Activated T-helper 1 cell treated with anti-CD3 and anti-CD28 coated beads, Interleukin-12 subunit alpha, Interleukin-12 subunit beta, Interleukin-2, Interleukin-4 antibody, amounts not matched to agents 30 ng/mL and 10 ng/mL and 1 ng/mL, durations not matched to agents 14 hours and 24 hours and 36 hours (primary cell): ENCODE measurements at regions of chr11 and their contacts with region 1.

Region 1: GRCh38 chr11:7278314-7278917 is 26.7 kb downstream of the SYT9 start:
- DNase-seq: no peak
- H3K4me3 Mint-ChIP-seq: no peak overlapping the region
- H3K27ac Mint-ChIP-seq: no peak overlapping the region
- H3K4me1 Mint-ChIP-seq: no peaks in the 10 kb centered on the region
- H3K27me3 Mint-ChIP-seq: no peaks in the 10 kb centered on the region

Region 2: GRCh38 chr11:6812390-6813005 is 465.9 kb before region 1 on chr11:
- intact Hi-C with region 1: loop called (anchors 10 kb)
- DNase-seq: peak; percentile 15
- H3K4me3 Mint-ChIP-seq: no peak overlapping the region
- H3K27ac Mint-ChIP-seq: no peak overlapping the region
- H3K4me1 Mint-ChIP-seq: no peaks in the 10 kb centered on the region
- H3K27me3 Mint-ChIP-seq: peaks cover 19% of the 10 kb centered on the region